ENCODE measurements at regions of chr7 and their contacts with region 1.

Region 1: DNA sequence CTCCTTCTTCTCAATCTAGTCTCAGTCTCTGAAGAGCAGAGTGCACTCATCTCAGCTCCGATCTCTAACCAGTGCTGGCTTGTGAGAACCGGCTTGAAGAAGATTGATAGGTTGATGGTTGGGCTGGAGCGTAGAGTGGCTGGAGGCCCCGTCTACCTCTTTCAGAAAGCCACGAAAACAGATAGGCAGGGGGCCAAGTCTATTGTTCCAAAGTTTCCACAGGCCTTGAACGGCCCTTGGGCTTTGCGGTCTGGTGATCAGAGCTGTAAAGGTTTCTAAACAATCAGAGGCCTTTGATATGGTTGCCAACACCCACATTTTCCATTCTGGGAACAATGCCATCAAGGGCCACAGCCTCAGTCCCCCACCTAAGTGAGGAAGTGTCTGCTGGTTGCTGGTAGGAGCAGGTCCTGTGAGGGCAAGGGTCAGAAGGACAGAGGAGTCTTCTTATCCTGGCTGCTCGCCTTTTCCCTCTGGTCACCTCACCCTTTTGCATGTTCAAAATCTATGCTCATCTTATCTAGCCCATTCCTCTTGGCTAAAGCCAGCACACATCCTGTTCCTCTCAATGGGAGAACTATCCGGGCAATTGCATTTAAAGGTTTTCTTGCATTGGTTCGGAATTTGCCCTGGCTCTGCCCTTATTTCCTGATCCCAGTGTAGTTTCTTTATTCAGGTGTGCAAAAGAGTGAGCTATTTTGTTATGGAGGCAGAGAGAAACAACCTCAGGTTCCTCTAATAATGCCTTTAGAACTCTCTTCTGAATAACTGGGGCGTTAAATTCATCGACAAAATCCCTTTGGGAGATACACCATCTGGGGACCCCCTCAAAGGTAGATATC is 70.3 kb upstream of the KMT2E start:
- DNase-seq: peak; percentile 89
- H3K4me3 Mint-ChIP-seq: peak overlapping the region; percentile 89
- H3K27ac Mint-ChIP-seq: peak overlapping the region; percentile 98
- H3K4me1 Mint-ChIP-seq: peaks cover 62% of the 10 kb centered on the region
- H3K27me3 Mint-ChIP-seq: no peaks in the 10 kb centered on the region

Region 2: GRCh38 chr7:103344453-103345149 is 1599.1 kb before region 1 on chr7 and contains the start of gene DNAJC2:
- CTCF ChIA-PET with region 1: no interaction called
- POLR2A ChIA-PET with region 1: no interaction called
- intact Hi-C with region 1: loop called (anchors 10 kb)
- DNase-seq: peak; percentile 90
- H3K4me3 Mint-ChIP-seq: peak within 1 kb of the TSS; percentile 90
- H3K27ac Mint-ChIP-seq: peak within 1 kb of the TSS; percentile 96
- H3K4me1 Mint-ChIP-seq: peaks cover 51% of the 10 kb centered on the region
- H3K27me3 Mint-ChIP-seq: no peaks in the 10 kb centered on the region
- total RNA-seq, gene DNAJC2: 51.1 to 51.5 TPM

Region 3: DNA sequence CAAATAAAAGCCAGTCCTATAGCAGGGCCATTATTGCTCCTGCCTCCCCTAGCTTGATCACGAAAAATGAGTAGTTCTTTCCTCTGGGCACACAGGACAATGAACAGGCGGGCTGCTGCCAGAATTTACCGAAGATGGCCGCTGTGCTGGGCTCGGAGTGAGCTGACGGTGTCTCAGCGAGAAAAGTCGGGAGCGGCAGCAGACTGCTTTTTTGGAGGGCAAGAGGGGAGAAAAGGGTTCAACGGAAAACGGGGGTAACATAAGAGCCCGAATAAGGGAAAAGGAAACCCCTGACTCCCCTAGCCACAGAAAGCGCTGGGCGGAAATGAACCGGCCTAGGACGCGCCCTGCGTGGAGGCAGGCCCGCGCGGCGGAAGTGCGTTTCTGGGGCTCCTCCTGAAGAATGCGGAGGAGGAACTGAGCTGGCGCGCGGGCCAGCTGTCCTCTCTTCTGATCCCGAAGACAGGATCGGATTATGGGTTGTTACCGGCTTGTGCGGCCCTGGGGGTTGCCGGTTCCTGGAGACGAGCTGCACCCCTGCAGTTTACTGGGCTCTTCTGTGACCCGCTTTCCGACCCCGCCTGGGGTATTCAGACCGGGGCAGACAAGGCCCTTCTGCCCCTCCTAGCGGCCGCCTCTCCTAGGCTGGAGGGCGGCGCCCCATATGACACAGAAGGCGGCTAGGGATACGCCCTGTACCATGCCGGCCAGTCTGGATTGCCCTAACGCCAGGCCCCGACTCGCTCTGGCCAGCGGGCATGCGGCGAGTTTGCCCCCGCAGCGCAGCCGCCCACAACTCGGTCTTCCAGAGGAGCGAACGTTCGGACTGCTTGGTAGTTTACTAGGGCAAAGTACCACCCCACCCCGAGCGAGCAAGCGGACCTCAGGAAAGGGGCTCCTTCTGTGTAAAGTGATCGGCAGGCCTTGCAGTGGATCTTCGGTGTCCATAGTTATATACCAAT is 40.1 kb after region 1 on chr7:
- CTCF ChIA-PET with region 1: interaction called, 11 read pairs
- POLR2A ChIA-PET with region 1: interaction called, 52 read pairs
- intact Hi-C with region 1: loop called (anchors 1 kb)
- DNase-seq: peak; percentile 91
- H3K4me3 Mint-ChIP-seq: peak overlapping the region; percentile 100
- H3K27ac Mint-ChIP-seq: peak overlapping the region; percentile 100
- H3K4me1 Mint-ChIP-seq: peaks cover 74% of the 10 kb centered on the region
- H3K27me3 Mint-ChIP-seq: no peaks in the 10 kb centered on the region

Region 4: GRCh38 chr7:105060437-105060836 is 116.7 kb after region 1 on chr7:
- CTCF ChIA-PET with region 1: no interaction called
- POLR2A ChIA-PET with region 1: no interaction called
- intact Hi-C with region 1: no loop called
- DNase-seq: no peak
- H3K4me3 Mint-ChIP-seq: no peak overlapping the region
- H3K27ac Mint-ChIP-seq: no peak overlapping the region
- H3K4me1 Mint-ChIP-seq: peaks cover 58% of the 10 kb centered on the region
- H3K27me3 Mint-ChIP-seq: no peaks in the 10 kb centered on the region

Region 5: GRCh38 chr7:105106473-105106872 is 162.8 kb after region 1 on chr7:
- CTCF ChIA-PET with region 1: no interaction called
- POLR2A ChIA-PET with region 1: interaction called, 3 read pairs
- intact Hi-C with region 1: loop called (anchors 1 kb)
- DNase-seq: peak; percentile 37
- H3K4me3 Mint-ChIP-seq: peak overlapping the region; percentile 23
- H3K27ac Mint-ChIP-seq: peak overlapping the region; percentile 86
- H3K4me1 Mint-ChIP-seq: peaks cover 30% of the 10 kb centered on the region
- H3K27me3 Mint-ChIP-seq: no peaks in the 10 kb centered on the region

Region 6: DNA sequence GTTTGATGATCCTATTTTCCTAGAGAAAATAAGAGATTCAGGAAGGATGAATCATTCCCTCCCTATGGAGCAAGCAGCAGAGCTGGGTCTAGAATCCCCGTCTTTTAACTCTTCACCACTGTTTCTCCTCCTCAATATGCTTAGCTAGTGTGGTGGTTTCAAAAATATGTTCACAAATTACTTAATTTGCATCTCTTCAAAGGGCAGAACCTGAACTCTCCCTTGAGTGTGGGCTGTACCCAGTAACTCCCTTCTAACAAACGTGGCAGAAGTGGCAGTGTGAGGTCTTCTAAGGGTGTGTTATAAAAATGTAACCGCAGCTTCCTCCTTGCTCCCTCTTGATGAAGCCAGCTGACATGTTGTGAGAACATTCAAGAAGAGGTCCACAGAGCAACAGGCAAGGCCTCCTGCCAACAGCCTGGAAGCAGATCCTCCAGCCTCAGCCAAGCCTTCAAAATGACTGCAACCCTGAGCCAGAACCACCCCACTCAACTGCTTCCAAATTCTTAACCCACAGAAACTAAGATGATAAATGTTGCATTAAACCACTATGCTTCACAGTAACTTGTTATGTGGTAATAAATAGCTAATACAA is 408.4 kb after region 1 on chr7:
- CTCF ChIA-PET with region 1: no interaction called
- POLR2A ChIA-PET with region 1: interaction called, 4 read pairs
- intact Hi-C with region 1: loop called (anchors 2 kb)
- DNase-seq: peak; percentile 68
- H3K4me3 Mint-ChIP-seq: peak overlapping the region; percentile 42
- H3K27ac Mint-ChIP-seq: peak overlapping the region; percentile 94
- H3K4me1 Mint-ChIP-seq: peaks cover 58% of the 10 kb centered on the region
- H3K27me3 Mint-ChIP-seq: no peaks in the 10 kb centered on the region

Region 7: GRCh38 chr7:106285051-106285854 is 1341.5 kb after region 1 on chr7:
- CTCF ChIA-PET with region 1: no interaction called
- POLR2A ChIA-PET with region 1: no interaction called
- intact Hi-C with region 1: loop called (anchors 10 kb)
- DNase-seq: peak; percentile 100
- H3K4me3 Mint-ChIP-seq: peak overlapping the region; percentile 92
- H3K27ac Mint-ChIP-seq: peak overlapping the region; percentile 99
- H3K4me1 Mint-ChIP-seq: peaks cover 50% of the 10 kb centered on the region
- H3K27me3 Mint-ChIP-seq: peaks cover 2% of the 10 kb centered on the region

Measured in activated CD4-positive, alpha-beta memory T cell treated with anti-CD3 and anti-CD28 coated beads for 36 hours (primary cell).